ENCODE measurements at regions of chr3 and their contacts with region 1.

Region 1: DNA sequence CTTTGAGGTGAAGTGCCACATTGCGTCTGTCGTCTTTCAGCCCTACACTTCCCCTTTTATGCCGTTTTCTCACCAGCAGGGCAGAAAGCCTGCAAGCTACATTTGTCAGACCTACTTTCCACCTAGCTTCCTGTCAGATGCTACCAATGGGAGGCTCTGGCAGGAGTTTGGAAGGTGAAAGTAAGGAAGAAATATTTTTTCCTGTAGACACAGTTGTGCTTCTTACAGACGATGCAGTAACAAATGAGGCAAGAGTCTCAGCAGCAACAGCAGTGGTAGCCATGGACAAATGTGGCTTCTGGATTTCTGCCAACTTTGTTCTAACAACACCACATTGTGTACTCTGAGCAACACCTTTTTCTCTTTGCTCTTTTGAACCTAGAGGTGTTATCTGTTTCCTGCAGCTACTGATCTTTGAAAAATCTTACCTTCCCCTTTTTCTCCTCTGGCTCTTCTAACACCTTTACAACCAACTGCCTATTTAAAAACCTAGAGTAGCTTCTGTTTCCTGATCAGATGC is 70.6 kb upstream of the STT3B start:
- DNase-seq: peak; percentile 47
- H3K4me3 Mint-ChIP-seq: peak overlapping the region; percentile 30
- H3K27ac Mint-ChIP-seq: peak overlapping the region; percentile 16
- H3K4me1 Mint-ChIP-seq: peaks cover 62% of the 10 kb centered on the region
- H3K27me3 Mint-ChIP-seq: no peaks in the 10 kb centered on the region

Region 2: DNA sequence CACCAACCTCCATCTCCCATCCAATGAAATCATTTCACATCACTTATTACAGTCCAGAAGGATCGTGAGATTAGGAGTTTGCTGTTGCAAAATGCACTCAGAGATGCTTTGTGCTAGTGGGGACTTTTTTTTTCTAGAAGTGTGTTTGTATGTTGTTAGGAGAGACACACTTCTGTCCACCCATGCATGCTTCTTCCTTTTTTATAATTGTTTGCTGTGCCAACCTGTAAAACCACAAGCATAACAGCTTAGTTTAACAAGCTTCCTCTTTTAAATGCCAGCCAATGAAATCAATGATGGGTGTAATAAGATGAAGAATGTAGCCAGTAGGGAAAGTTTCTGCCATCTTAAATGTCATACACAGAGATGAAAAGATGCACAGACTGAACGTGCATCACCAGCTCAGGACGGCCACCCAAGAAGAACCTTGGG is 235.0 kb before region 1 on chr3:
- CTCF ChIA-PET with region 1: no interaction called
- POLR2A ChIA-PET with region 1: no interaction called
- intact Hi-C with region 1: loop called (anchors 5 kb)
- DNase-seq: no peak
- H3K4me3 Mint-ChIP-seq: peak overlapping the region; percentile 2
- H3K27ac Mint-ChIP-seq: peak overlapping the region; percentile 84
- H3K4me1 Mint-ChIP-seq: peaks cover 87% of the 10 kb centered on the region
- H3K27me3 Mint-ChIP-seq: no peaks in the 10 kb centered on the region

Region 3: DNA sequence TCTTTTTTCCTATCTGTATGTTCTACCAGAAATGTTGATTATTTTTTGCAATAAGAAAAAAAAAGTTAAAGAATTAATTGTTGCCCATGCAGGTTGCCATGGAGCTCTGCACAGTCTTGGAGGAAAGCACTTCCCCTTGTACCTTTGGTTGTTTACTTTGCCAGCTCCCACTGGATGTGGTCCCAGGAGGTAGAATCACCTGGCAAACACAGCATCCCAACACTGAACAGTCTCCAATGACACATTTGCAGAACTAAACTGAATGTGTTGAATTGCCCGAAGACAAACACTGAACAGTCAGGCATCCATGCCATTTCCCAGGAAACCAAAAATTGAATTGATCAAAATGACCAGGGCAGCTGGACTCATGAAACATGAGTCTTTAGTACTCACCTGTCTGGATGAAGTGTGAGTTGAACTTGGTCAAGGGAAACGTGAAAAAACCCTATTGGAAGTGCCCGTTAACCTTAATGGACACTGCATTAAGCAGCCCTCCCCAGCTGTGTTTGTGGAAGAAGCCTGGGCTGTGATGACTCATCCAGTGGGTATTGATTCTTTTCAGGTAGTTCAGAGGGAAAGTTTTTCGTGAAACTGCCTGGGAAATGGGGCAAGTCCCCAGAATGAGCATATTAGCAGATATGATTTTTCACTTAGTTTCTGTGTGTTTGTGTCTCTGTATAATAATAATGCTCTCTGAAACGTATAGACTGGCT is 214.1 kb before region 1 on chr3:
- CTCF ChIA-PET with region 1: no interaction called
- POLR2A ChIA-PET with region 1: no interaction called
- intact Hi-C with region 1: loop called (anchors 5 kb)
- DNase-seq: peak; percentile 58
- H3K4me3 Mint-ChIP-seq: no peak overlapping the region
- H3K27ac Mint-ChIP-seq: peak overlapping the region; percentile 67
- H3K4me1 Mint-ChIP-seq: peaks cover 50% of the 10 kb centered on the region
- H3K27me3 Mint-ChIP-seq: no peaks in the 10 kb centered on the region

Region 4: GRCh38 chr3:31391150-31391549 is 71.0 kb before region 1 on chr3:
- CTCF ChIA-PET with region 1: no interaction called
- POLR2A ChIA-PET with region 1: no interaction called
- intact Hi-C with region 1: no loop called
- DNase-seq: no peak
- H3K4me3 Mint-ChIP-seq: no peak overlapping the region
- H3K27ac Mint-ChIP-seq: no peak overlapping the region
- H3K4me1 Mint-ChIP-seq: peaks cover 7% of the 10 kb centered on the region
- H3K27me3 Mint-ChIP-seq: no peaks in the 10 kb centered on the region

Region 5: DNA sequence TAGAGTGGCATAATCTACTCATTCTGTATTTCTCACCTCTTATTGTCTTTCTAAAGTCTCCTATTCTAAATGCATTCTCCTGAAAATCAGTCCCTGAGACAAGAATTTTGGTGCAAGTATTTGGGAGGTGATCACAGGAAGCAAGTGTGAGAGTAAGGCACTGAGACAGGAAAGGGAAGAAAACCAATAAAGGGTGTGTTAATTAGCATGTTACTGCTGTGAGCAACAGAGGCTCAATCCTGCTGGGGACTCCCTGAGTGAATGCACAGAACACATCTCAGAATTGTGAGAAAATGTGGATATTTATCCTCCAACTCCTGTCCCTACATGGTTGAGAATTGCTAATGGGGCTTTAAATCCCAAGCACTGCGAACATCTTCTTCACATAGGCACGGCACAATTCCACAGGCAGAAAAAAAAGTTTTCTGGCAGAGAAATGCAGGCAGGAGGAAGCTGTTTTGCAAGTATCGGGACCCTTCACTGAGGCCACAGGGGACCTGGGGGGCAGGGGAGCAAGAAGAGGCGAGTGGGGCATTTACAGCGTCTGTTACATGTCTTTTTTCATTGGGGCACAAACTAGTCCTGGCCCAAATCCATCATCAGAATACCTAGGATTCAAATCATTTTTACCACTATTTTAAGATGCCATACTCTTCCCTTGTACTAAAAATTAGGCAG is 43.4 kb after region 1 on chr3:
- CTCF ChIA-PET with region 1: no interaction called
- POLR2A ChIA-PET with region 1: no interaction called
- intact Hi-C with region 1: loop called (anchors 5 kb)
- DNase-seq: no peak
- H3K4me3 Mint-ChIP-seq: no peak overlapping the region
- H3K27ac Mint-ChIP-seq: no peak overlapping the region
- H3K4me1 Mint-ChIP-seq: peaks cover 61% of the 10 kb centered on the region
- H3K27me3 Mint-ChIP-seq: no peaks in the 10 kb centered on the region

Region 6: DNA sequence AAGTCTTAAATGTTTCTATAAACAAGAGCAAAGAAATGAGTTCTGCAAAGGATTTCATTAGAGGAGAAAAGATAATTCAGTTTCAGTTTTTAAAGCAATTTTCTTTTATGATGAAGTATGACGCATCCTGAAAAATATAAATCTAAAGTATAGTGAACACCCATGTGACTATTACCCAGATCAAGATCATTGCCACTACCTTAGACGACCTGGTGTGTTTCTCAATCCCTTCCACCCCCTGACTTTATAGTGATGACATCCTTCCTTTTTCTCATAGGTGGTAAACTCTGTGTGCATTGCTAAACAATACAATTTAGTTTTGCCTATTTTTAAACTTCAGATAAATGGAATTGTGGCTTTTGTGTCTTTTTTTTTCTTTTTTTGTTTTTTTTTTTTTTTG is 79.0 kb after region 1 on chr3:
- CTCF ChIA-PET with region 1: no interaction called
- POLR2A ChIA-PET with region 1: no interaction called
- intact Hi-C with region 1: no loop called
- DNase-seq: no peak
- H3K4me3 Mint-ChIP-seq: no peak overlapping the region
- H3K27ac Mint-ChIP-seq: peak overlapping the region; percentile 42
- H3K4me1 Mint-ChIP-seq: peaks cover 88% of the 10 kb centered on the region
- H3K27me3 Mint-ChIP-seq: no peaks in the 10 kb centered on the region

Measured in activated CD4-positive, alpha-beta memory T cell treated with anti-CD3 and anti-CD28 coated beads for 36 hours (primary cell).